Endothelial cell of umbilical vein (primary cell): ENCODE measurements at regions of chr18 and their contacts with region 1.

Region 1: DNA sequence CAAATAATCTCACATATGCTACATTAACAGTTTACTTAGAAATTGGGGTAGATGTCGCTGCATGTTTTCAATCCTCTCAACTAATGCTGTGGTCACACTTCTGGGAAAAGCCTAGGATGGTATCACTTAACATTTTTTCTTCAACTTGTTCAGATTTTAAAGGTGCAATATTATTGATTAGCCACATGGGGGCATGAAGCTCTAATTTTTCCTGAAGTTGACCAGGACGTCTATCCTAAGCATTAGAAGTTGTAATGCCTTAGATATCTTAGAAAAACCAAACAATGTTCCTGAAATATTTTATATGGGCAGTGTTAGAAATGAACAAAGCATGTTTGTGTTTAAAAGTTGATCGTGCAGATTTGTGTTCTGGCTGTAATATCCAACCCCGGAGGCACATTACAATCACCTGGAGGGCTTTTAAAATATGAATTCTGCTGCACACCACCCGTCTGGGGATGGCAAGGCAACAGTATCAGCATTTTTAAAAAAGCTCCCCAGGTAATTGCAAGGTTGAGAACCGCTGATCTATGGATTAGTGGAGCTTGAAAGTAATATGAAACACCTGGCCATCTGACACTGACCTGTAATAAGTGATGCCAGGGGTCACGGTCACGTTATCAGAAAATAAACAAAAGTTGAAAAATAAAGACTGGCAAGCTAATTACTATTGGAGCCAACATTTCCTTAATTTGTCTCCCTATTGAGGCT is 100.5 kb upstream of the LMAN1 start:
- DNase-seq: peak; percentile 28
- H3K4me3 ChIP-seq: no peak overlapping the region
- H3K27ac ChIP-seq: no peak overlapping the region
- H3K4me1 ChIP-seq: no peaks in the 10 kb centered on the region
- H3K27me3 ChIP-seq: no peaks in the 10 kb centered on the region
- CTCF ChIP-seq: peak; percentile 17 to 40
- POLR2A ChIP-seq: no peak

Region 2: DNA sequence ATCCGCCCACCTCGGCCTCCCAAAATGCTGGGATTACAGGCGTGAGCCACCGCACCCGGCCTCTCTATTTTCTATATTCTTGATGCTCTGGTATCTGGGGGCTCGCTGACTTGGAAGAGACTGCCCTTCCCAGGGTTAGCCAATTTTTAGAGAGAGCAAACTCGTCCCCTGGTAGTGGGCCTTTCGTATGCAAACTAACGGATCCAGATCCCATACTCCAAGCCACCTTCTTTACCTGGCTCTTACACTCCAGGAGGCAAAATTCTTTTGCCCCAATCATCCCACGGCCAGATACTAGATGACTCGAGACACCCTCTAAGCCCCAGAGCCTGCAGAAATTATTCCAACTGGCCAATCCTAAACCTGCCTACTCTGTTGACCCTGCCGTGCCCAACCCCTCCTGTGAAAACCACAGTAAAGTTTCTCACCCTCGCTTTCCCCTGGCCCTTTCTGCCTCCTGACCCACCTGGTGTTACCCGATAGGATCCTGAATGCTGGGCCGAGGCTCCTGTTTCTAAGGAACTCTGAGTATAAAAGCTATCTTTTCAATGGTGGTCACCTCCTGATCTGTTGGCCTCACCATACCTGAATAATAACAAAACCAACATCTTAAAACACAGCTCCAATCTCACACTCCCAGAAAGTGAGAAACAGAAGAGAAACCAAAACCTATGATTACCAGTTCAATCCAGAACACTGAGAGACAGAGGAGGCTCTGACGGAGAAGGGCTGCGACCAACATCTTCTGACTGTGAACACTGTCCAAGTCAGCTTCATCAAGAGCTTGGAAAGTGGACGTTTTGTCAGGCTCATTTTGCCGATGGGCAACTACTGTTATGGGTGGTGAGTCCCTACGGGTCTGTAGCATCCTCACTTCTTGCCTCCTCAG is 652.5 kb before region 1 on chr18:
- CTCF ChIA-PET with region 1: no interaction called
- POLR2A ChIA-PET with region 1: no interaction called
- dilution Hi-C with region 1: no loop called
- intact Hi-C with region 1: no loop called
- DNase-seq: no peak
- H3K4me3 ChIP-seq: no peak overlapping the region
- H3K27ac ChIP-seq: no peak overlapping the region
- H3K4me1 ChIP-seq: no peaks in the 10 kb centered on the region
- H3K27me3 ChIP-seq: no peaks in the 10 kb centered on the region
- CTCF ChIP-seq: no peak
- POLR2A ChIP-seq: no peak

Region 3: GRCh38 chr18:59470561-59471121 is 11.1 kb after region 1 on chr18:
- CTCF ChIA-PET with region 1: interaction called, 20 read pairs
- POLR2A ChIA-PET with region 1: no interaction called
- dilution Hi-C with region 1: no loop called
- intact Hi-C with region 1: no loop called
- DNase-seq: no peak
- H3K4me3 ChIP-seq: no peak overlapping the region
- H3K27ac ChIP-seq: no peak overlapping the region
- H3K4me1 ChIP-seq: no peaks in the 10 kb centered on the region
- H3K27me3 ChIP-seq: no peaks in the 10 kb centered on the region
- CTCF ChIP-seq: no peak
- POLR2A ChIP-seq: no peak

Region 4: GRCh38 chr18:59570101-59570775 is 110.7 kb after region 1 on chr18:
- CTCF ChIA-PET with region 1: interaction called, 13 read pairs
- POLR2A ChIA-PET with region 1: no interaction called
- dilution Hi-C with region 1: no loop called
- intact Hi-C with region 1: no loop called
- DNase-seq: no peak
- H3K4me3 ChIP-seq: no peak overlapping the region
- H3K27ac ChIP-seq: no peak overlapping the region
- H3K4me1 ChIP-seq: no peaks in the 10 kb centered on the region
- H3K27me3 ChIP-seq: no peaks in the 10 kb centered on the region
- CTCF ChIP-seq: no peak
- POLR2A ChIP-seq: no peak

Region 5: GRCh38 chr18:59623456-59624368 is 164.2 kb after region 1 on chr18:
- CTCF ChIA-PET with region 1: interaction called, 12 read pairs
- POLR2A ChIA-PET with region 1: interaction called, 4 read pairs
- dilution Hi-C with region 1: no loop called
- intact Hi-C with region 1: no loop called
- DNase-seq: no peak
- H3K4me3 ChIP-seq: no peak overlapping the region
- H3K27ac ChIP-seq: no peak overlapping the region
- H3K4me1 ChIP-seq: no peaks in the 10 kb centered on the region
- H3K27me3 ChIP-seq: peaks cover 0 to 1% of the 10 kb centered on the region in 2 experiments
- CTCF ChIP-seq: no peak
- POLR2A ChIP-seq: no peak

Region 6: DNA sequence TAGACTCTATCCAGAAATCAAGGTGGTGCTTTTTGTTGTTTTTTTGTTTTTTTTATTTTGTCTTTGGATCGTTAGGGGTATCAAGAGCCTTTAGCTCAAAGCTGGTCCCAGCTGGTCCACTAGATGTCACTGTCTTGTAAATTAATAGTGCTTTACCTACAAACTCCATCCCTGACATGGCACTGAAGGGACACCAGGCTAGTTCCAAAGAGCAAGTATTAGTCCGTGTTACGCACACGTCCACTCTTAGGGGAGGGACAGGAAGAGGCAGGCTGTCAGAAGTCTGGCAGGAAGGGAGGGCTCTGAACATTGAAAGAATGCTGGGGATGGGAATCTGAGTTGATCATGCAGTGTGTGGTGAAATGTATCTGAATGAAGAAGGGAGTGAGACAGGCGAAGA is 323.6 kb after region 1 on chr18:
- CTCF ChIA-PET with region 1: interaction called, 10 read pairs
- POLR2A ChIA-PET with region 1: no interaction called
- dilution Hi-C with region 1: no loop called
- intact Hi-C with region 1: no loop called
- DNase-seq: peak; percentile 30
- H3K4me3 ChIP-seq: no peak overlapping the region
- H3K27ac ChIP-seq: no peak overlapping the region
- H3K4me1 ChIP-seq: no peaks in the 10 kb centered on the region
- H3K27me3 ChIP-seq: no peaks in the 10 kb centered on the region
- CTCF ChIP-seq: peak; percentile 41 to 47
- POLR2A ChIP-seq: no peak

Region 7: GRCh38 chr18:59814891-59815290 is 355.4 kb after region 1 on chr18:
- CTCF ChIA-PET with region 1: interaction called, 10 read pairs
- POLR2A ChIA-PET with region 1: no interaction called
- dilution Hi-C with region 1: no loop called
- intact Hi-C with region 1: no loop called
- DNase-seq: no peak
- H3K4me3 ChIP-seq: no peak overlapping the region
- H3K27ac ChIP-seq: no peak overlapping the region
- H3K4me1 ChIP-seq: no peaks in the 10 kb centered on the region
- H3K27me3 ChIP-seq: no peaks in the 10 kb centered on the region
- CTCF ChIP-seq: no peak
- POLR2A ChIP-seq: no peak

Region 8: DNA sequence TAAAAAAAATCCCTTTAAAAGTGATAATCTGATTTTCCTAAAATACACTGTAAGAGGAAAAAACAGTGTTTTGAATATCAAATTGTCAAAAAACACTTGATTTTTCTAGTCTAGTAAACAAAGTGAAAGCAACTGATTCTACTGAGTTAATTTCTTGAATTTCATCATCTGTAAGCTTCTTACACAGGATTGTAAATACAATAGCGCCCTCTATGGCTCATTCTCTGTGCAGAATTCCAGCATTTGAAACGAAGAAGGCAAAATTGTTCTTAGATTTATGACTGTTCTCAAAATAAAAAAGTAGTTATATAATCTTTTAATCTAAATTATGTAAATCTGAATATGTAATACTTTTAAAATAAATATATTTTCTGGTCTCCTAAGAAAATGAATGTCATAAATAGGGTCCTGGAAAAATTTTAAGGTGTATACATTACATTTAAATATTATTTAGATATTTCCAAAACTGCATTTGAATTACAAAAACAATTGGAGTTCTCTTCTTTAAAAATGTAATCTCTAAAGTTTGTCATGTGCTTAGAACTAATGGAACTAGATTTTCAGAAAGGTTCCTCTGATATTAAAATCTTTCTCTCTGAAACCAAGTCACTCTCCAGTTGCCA is 1089.9 kb after region 1 on chr18:
- CTCF ChIA-PET with region 1: interaction called, 15 read pairs
- POLR2A ChIA-PET with region 1: no interaction called
- dilution Hi-C with region 1: no loop called
- intact Hi-C with region 1: no loop called
- DNase-seq: peak; percentile 64
- H3K4me3 ChIP-seq: no peak overlapping the region
- H3K27ac ChIP-seq: no peak overlapping the region
- H3K4me1 ChIP-seq: no peaks in the 10 kb centered on the region
- H3K27me3 ChIP-seq: no peaks in the 10 kb centered on the region
- CTCF ChIP-seq: peak; percentile 53 to 57
- POLR2A ChIP-seq: no peak